Activated naive CD4-positive, alpha-beta T cell treated with anti-CD3 and anti-CD28 coated beads for 36 hours (primary cell): ENCODE measurements at regions of chr2 and their contacts with region 1.

Region 1: DNA sequence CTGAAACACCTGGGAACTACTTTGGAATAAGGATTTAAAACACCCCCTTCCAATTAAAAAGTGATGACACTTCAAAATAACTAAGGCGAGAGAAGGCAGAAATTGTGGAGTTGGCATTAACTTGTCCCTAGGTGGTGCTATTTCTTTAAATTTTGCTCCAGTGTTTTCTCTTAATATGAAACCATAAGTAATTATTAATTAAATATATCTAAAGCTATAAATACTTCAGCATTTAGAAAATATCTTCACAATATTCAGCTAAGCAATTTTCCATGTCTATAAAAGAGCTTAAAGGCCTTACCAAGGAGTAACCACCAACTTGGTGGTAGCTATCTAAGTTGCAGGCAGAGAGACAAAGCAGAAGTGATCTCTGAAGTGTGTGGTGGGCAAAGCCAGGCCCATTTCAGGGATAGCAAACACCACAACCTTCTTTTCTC is 186.8 kb upstream of the PGAP1 start:
- DNase-seq: no peak
- H3K4me3 Mint-ChIP-seq: no peak overlapping the region
- H3K27ac Mint-ChIP-seq: peak overlapping the region; percentile 28
- H3K4me1 Mint-ChIP-seq: peaks cover 22% of the 10 kb centered on the region
- H3K27me3 Mint-ChIP-seq: no peaks in the 10 kb centered on the region

Region 2: DNA sequence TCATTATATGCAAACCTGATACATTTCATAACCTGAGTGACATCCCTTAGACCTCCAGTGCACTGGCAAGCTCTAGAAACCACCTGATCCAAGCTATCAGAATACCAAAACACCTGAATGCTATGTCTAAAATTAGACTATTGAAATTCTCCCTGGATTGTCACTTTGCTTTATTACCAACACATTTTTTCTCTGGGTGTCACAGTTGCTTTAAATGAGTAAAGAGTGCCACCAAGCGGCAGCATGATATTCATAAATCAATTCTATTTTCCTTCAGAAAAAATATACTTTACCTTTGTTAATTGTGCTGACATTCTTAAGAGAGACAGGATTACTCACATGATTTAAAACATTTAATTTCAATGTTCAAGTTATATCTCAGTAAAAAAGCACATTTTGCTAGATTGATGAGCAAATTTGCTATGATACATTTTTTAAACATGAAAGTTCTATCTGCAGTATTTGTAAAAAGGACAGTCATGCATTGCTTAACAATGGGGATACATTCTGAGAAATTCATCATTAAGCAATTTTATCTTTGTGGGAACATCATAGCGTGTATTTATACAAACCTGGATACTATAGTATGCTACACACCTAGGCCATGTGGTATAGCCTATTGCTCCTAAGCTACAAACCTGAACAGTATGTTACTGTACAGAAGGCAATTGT is 1794.7 kb before region 1 on chr2:
- CTCF ChIA-PET with region 1: no interaction called
- intact Hi-C with region 1: no loop called
- DNase-seq: peak; percentile 69
- H3K4me3 Mint-ChIP-seq: no peak overlapping the region
- H3K27ac Mint-ChIP-seq: no peak overlapping the region
- H3K4me1 Mint-ChIP-seq: peaks cover 10% of the 10 kb centered on the region
- H3K27me3 Mint-ChIP-seq: no peaks in the 10 kb centered on the region

Region 3: GRCh38 chr2:197130318-197130717 is 17.0 kb after region 1 on chr2:
- CTCF ChIA-PET with region 1: interaction called, 21 read pairs
- intact Hi-C with region 1: no loop called
- DNase-seq: no peak
- H3K4me3 Mint-ChIP-seq: no peak overlapping the region
- H3K27ac Mint-ChIP-seq: peak overlapping the region; percentile 76
- H3K4me1 Mint-ChIP-seq: peaks cover 73% of the 10 kb centered on the region
- H3K27me3 Mint-ChIP-seq: no peaks in the 10 kb centered on the region

Region 4: DNA sequence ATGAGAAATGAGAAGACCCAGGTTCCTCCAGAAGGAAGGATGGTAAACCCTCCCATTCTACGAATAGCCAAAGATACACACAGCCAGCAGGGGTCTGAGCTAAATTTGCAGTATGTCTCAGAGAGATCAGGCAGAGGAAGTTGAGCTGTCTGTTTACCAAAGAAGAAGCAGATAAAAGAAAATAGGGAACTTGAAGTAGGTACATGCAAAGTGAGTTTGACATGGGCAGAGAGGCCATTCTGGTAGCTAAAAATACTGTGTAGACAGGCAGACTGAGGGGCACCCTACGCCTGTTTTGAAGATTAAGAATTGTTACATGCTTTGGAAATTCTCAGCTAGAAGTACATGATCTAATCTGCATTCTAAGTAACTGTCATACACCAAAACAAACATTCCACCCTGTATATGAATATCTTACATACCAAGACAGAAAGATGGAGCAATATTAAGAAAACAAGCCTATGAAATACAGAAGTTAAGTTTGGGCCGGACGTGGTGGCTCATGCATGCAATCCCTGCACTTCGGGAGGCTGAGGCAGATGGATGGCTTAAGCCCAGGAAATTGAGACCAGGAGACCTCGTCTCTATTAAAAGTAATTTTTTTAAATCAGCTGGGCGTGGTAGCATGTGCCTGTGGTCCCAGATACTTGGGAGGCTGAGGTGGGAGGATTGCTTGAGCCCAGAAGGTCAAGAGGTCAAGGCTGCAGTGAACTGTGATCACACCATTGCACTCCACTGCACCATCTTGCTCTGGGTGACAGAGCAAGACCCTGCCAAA is 39.3 kb after region 1 on chr2:
- CTCF ChIA-PET with region 1: interaction called, 10 read pairs
- intact Hi-C with region 1: no loop called
- DNase-seq: peak; percentile 26
- H3K4me3 Mint-ChIP-seq: peak overlapping the region; percentile 47
- H3K27ac Mint-ChIP-seq: peak overlapping the region; percentile 60
- H3K4me1 Mint-ChIP-seq: peaks cover 80% of the 10 kb centered on the region
- H3K27me3 Mint-ChIP-seq: no peaks in the 10 kb centered on the region

Region 5: GRCh38 chr2:197179744-197180498 is 66.6 kb after region 1 on chr2:
- CTCF ChIA-PET with region 1: interaction called, 12 read pairs
- intact Hi-C with region 1: no loop called
- DNase-seq: no peak
- H3K4me3 Mint-ChIP-seq: no peak overlapping the region
- H3K27ac Mint-ChIP-seq: no peak overlapping the region
- H3K4me1 Mint-ChIP-seq: peaks cover 61% of the 10 kb centered on the region
- H3K27me3 Mint-ChIP-seq: no peaks in the 10 kb centered on the region

Region 6: GRCh38 chr2:197322724-197323720 is 209.7 kb after region 1 on chr2:
- CTCF ChIA-PET with region 1: interaction called, 10 read pairs
- intact Hi-C with region 1: no loop called
- DNase-seq: peak; percentile 41
- H3K4me3 Mint-ChIP-seq: peak overlapping the region; percentile 62
- H3K27ac Mint-ChIP-seq: peak overlapping the region; percentile 88
- H3K4me1 Mint-ChIP-seq: peaks cover 73% of the 10 kb centered on the region
- H3K27me3 Mint-ChIP-seq: no peaks in the 10 kb centered on the region

Region 7: GRCh38 chr2:197777823-197778407 is 664.6 kb after region 1 on chr2:
- CTCF ChIA-PET with region 1: interaction called, 3 read pairs
- intact Hi-C with region 1: loop called (anchors 5 kb)
- DNase-seq: peak; percentile 52
- H3K4me3 Mint-ChIP-seq: no peak overlapping the region
- H3K27ac Mint-ChIP-seq: no peak overlapping the region
- H3K4me1 Mint-ChIP-seq: no peaks in the 10 kb centered on the region
- H3K27me3 Mint-ChIP-seq: peaks cover 5% of the 10 kb centered on the region